Posterior vena cava (tissue), 2 donors: ENCODE measurements at regions of chr2 and their contacts with region 1.

Region 1: DNA sequence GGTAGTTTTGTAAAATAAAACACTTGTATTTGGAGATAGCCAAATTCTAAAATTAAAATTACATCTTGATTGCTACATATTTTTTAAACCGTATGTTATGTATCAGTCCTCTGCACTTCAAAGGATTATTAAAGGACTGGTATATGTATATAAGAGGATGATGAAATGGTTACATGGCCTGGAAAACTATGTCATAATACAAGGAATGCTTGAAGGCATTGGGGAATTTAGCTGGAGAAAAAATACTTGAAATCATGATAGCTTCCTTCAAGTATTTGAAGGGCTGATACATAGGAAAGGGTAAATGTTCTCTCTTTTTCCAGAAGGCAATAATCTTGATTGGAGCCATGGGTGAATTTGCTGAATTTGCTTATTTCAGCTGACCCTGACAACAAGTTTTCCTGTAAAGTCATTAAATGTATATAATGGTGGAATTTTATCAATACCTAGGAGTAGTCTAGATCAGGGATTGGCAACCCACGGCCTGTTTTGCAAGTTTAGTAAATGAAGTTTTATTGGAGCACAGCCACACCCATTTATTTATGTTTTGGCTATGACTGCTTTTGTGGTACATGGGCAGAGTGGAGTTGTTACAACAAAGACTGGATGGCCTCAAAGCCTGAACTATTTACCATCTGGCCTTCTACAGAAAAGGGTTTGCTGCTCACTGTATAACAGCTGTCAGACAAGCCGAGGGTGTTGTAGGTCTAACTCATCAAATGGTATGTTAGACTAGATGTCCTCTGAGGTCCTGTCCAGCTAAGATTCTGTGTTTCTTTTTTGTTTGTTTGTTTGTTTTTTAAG is 34.4 kb downstream of the ACYP2 start:
- DNase-seq: no peak

Region 2: GRCh38 chr2:55327470-55328230 is 1177.8 kb after region 1 on chr2:
- intact Hi-C with region 1: loop called in 1 of 2 experiments (anchors 5 kb)
- DNase-seq: no peak

Region 3: GRCh38 chr2:55395724-55396605 is 1246.1 kb after region 1 on chr2:
- intact Hi-C with region 1: loop called in 1 of 2 experiments (anchors 10 kb)
- DNase-seq: no peak